MCF 10A (cell line): ENCODE measurements at regions of chr18 and their contacts with region 1.

Region 1: GRCh38 chr18:11733031-11733430 is 44.0 kb downstream of the GNAL start:
- DNase-seq: peak; percentile 75
- H3K4me3 Mint-ChIP-seq: peak overlapping the region; percentile 17
- H3K27ac Mint-ChIP-seq: no peak overlapping the region
- H3K4me1 Mint-ChIP-seq: no peaks in the 10 kb centered on the region
- H3K27me3 Mint-ChIP-seq: peaks cover 30% of the 10 kb centered on the region
- CTCF ChIP-seq: peak; percentile 90

Region 2: DNA sequence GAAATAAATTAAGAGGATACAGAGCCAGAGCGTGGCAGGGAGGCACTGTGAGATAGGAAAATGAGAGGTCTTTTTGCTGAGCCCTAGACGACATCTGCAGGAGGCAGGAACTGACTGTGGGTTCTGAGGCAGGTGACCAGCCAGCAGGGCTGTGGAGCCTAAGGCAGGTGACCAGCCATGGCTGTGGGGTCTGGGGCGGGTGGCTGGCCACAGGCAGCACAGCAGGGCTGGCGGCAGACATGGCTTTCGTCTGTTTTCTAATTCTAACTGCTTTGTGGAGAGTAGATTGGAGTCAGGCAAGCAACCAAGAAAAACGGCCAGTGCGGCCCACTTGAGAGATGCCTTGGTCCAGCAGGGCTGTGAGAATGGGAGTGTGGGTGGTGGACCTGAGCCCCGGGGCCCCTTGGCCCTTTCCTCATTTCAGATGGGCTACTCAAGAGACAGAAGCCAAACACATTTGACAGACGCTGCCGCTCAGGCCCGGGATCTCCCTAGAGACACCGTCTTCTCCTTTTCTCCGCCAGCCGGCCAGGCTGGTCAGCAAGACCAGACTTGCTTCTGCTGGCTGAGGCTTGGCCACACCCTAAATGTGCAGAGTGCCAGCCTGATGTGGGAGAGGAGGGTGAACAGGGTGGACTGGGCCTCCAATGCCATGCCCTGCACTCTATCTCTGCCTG is 63.6 kb before region 1 on chr18:
- CTCF ChIA-PET with region 1: interaction called, 19 read pairs
- POLR2A ChIA-PET with region 1: interaction called, 3 read pairs
- intact Hi-C with region 1: no loop called
- DNase-seq: peak; percentile 85
- H3K4me3 Mint-ChIP-seq: peak overlapping the region; percentile 2
- H3K27ac Mint-ChIP-seq: no peak overlapping the region
- H3K4me1 Mint-ChIP-seq: peaks cover 28% of the 10 kb centered on the region
- H3K27me3 Mint-ChIP-seq: no peaks in the 10 kb centered on the region
- CTCF ChIP-seq: no peak

Region 3: DNA sequence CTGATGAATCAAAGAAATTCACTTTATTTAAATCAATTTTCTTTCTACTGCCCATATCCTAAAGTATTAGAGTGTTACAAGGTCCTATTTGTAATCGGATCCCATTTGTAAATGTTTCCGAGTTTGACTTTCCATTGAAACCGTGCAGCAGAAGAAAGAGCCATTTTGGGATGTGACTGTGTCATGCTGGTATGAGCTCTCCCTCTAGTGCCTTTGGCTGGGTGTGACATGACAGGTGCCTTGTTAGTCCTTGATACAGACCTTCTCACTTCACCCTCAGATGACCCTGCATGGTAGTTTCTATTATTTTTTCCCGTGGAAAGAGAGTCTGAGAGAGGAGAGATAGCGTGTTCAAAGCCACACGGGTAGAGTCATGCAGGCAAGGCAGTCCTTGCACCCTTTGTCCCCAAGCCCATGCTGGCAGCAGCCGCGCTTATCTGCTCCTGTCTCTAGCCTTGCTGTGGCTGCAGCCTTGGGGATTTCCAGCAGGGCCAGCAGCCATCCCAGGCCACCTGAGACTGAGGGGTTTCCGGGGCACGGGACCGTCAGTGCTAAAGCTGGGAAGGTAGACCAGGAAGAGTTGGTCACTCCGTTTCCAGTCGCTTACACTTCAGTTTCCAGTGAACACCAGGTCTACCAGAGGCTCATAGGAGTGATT is 139.6 kb after region 1 on chr18:
- CTCF ChIA-PET with region 1: interaction called, 27 read pairs
- POLR2A ChIA-PET with region 1: interaction called, 3 read pairs
- intact Hi-C with region 1: loop called (anchors 1 kb)
- DNase-seq: peak; percentile 73
- H3K4me3 Mint-ChIP-seq: no peak overlapping the region
- H3K27ac Mint-ChIP-seq: no peak overlapping the region
- H3K4me1 Mint-ChIP-seq: no peaks in the 10 kb centered on the region
- H3K27me3 Mint-ChIP-seq: no peaks in the 10 kb centered on the region
- CTCF ChIP-seq: peak; percentile 62

Region 4: DNA sequence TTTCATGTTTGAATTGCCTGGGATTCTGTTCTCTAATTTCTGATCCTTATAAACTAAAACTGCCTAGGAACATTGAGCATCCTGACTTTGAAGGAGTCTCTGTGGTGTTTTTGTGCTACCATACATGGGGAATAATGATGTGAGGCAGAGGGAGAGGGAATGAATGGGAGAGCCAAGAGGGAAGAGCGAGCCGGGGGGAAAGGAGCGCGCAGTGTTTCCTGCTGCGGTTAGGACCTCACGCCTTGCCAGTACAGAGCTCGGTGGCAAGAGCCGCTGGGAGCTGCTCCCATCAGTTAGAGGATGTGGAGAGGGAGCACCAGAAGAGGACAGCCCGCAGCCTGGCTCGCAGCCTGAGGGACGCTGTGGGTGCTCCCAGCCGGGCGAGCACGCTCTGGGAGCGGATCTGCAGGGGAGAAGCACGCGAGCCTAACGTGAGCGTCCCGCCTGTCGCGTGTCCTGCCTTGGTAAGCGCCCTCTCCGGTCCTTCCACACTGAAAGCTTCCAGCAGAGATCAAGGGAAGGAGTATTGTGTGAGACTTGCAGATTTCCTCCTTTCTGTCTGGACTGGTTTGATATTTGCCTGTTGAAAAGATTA is 1878.7 kb after region 1 on chr18:
- CTCF ChIA-PET with region 1: no interaction called
- POLR2A ChIA-PET with region 1: no interaction called
- intact Hi-C with region 1: no loop called
- DNase-seq: no peak
- H3K4me3 Mint-ChIP-seq: peak overlapping the region; percentile 30
- H3K27ac Mint-ChIP-seq: no peak overlapping the region
- H3K4me1 Mint-ChIP-seq: peaks cover 6% of the 10 kb centered on the region
- H3K27me3 Mint-ChIP-seq: peaks cover 42% of the 10 kb centered on the region
- CTCF ChIP-seq: no peak